AG04450 (cell line): ENCODE measurements at regions of chr15 and their contacts with region 1.

Region 1: DNA sequence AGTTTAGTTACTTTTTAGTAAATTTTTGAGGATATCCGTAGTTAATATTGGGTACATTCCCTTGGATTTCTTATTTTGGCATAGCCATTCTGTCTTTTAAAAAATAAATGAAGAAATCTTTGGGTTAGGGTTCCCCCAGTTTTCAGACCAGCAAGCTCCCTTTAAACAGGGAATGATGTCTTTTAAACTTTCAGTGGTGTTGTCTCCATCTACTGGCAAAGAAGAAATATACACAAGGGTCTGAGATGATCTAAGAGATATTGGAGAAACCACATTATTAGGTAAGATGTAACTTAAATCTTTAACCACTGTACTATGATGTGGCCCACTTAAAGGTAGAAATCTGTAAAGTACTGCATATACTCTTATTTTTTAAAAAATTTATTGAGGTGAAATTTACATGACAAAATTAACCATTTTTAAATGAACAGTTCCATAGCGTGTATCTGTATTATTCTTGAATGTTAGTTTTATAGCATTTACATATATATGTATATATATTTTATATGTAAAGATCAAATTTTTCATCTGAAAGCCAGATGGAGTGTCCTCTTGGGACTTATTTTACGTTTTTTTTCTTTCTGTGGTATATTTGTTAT is 35.1 kb upstream of the EIF3J start:
- DNase-seq: peak; percentile 24
- H3K4me3 ChIP-seq: no peak overlapping the region
- H3K27ac ChIP-seq: no peak overlapping the region
- H3K27me3 ChIP-seq: no peaks in the 10 kb centered on the region
- CTCF ChIP-seq: peak; percentile 74

Region 2: DNA sequence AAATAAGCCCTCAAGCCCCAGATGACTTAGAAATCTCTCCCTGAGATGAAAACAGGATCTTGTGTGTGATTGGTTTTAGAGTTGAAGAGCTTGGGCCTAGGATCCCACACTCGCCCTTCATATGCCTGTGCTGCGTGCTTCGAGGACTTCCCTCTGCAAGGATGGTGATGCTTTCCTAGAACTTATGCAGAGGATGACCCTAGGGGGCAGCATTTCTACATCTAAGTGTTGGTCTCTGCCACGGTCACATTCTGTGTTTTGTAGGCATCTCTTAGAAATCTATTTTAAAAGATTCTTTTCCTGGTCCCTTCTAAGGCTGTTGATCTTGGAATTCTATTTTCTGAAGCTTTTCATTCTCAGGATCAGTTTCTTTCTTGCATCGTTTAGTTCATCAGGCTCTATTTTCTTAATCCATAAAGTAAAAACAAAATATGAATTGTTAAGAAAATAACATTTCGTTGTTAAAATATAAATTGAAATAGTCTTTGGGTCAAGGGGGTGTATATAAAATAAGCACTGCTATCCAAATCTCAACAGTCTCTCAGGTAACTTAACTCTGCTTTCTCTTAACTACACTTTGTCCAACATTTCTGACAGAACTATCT is 629.3 kb before region 1 on chr15:
- CTCF ChIA-PET with region 1: interaction called, 14 read pairs
- POLR2A ChIA-PET with region 1: no interaction called
- DNase-seq: peak; percentile 51
- H3K4me3 ChIP-seq: no peak overlapping the region
- H3K27ac ChIP-seq: no peak overlapping the region
- H3K27me3 ChIP-seq: no peaks in the 10 kb centered on the region
- CTCF ChIP-seq: peak; percentile 80

Region 3: GRCh38 chr15:43903864-43904290 is 598.0 kb before region 1 on chr15:
- CTCF ChIA-PET with region 1: interaction called, 13 read pairs
- POLR2A ChIA-PET with region 1: no interaction called
- DNase-seq: peak; percentile 26
- H3K4me3 ChIP-seq: no peak overlapping the region
- H3K27ac ChIP-seq: no peak overlapping the region
- H3K27me3 ChIP-seq: no peaks in the 10 kb centered on the region
- CTCF ChIP-seq: peak; percentile 89

Region 4: GRCh38 chr15:44286814-44287452 is 214.9 kb before region 1 on chr15:
- CTCF ChIA-PET with region 1: interaction called, 22 read pairs
- POLR2A ChIA-PET with region 1: interaction called, 3 read pairs
- DNase-seq: no peak
- H3K4me3 ChIP-seq: peak overlapping the region; percentile 87
- H3K27ac ChIP-seq: no peak overlapping the region
- H3K27me3 ChIP-seq: no peaks in the 10 kb centered on the region
- CTCF ChIP-seq: peak; percentile 29

Region 5: GRCh38 chr15:44426975-44427755 is 74.7 kb before region 1 on chr15 and contains the start of gene CTDSPL2:
- CTCF ChIA-PET with region 1: interaction called, 36 read pairs
- POLR2A ChIA-PET with region 1: interaction called, 12 read pairs
- DNase-seq: peak; percentile 98
- H3K4me3 ChIP-seq: peak within 1 kb of the TSS; percentile 96
- H3K27ac ChIP-seq: peak within 1 kb of the TSS; percentile 100
- H3K27me3 ChIP-seq: no peaks in the 10 kb centered on the region
- CTCF ChIP-seq: 0 out of 2 replicates have a peak, but pooled peaks have one; percentile 43
- polyA plus RNA-seq, gene CTDSPL2: 43.8 and 59.6 TPM in 2 replicates

Region 6: GRCh38 chr15:44489464-44489863 is 12.4 kb before region 1 on chr15:
- CTCF ChIA-PET with region 1: interaction called, 27 read pairs
- POLR2A ChIA-PET with region 1: no interaction called
- DNase-seq: peak; percentile 49
- H3K4me3 ChIP-seq: no peak overlapping the region
- H3K27ac ChIP-seq: no peak overlapping the region
- H3K27me3 ChIP-seq: no peaks in the 10 kb centered on the region
- CTCF ChIP-seq: no peak